ENCODE measurements at regions of chr10 and their contacts with region 1.

Region 1: GRCh38 chr10:6348096-6348874 is 145.6 kb downstream of the PFKFB3 start:
- DNase-seq: peak; percentile 41 to 96 (median 93)
- ATAC-seq: peak; percentile 95
- H3K4me3 ChIP-seq: peak overlapping the region; percentile 54
- H3K4me3 Mint-ChIP-seq: peak overlapping the region; percentile 78 to 88 (median 82)
- H3K27ac ChIP-seq: peak overlapping the region; percentile 79
- H3K27ac Mint-ChIP-seq: peak overlapping the region; percentile 91 to 99 (median 96)
- H3K4me1 ChIP-seq: peaks cover 25 to 34% of the 10 kb centered on the region in 2 donors
- H3K4me1 Mint-ChIP-seq: peaks cover 40 to 77% (median 57%) of the 10 kb centered on the region in 7 donors
- H3K27me3 ChIP-seq: no peaks in the 10 kb centered on the region
- H3K27me3 Mint-ChIP-seq: no peaks in the 10 kb centered on the region

Region 2: DNA sequence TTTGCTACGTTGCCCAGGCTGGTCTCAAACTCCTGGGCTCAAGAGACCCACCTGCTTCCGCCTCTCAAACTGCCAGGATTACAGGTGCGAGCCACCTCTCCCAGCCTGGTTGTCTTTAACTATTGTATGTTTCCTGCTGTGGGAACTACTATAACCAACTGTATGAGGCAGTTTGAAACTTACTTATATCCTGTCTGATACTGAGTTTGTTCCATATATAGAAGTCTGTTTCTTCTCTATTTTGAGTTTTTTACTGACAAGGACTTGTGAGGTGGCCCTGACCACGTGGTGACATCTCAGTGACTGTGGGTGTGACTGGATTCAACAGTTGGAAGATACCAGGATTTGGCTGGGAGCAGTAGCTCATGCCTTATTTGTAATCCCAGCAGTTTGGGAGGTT is 444.1 kb before region 1 on chr10:
- CTCF ChIA-PET with region 1: no interaction called
- POLR2A ChIA-PET with region 1: no interaction called
- intact Hi-C with region 1: no loop called
- DNase-seq: no peak
- ATAC-seq: no peak
- H3K4me3 ChIP-seq: no peak overlapping the region
- H3K4me3 Mint-ChIP-seq: no peak overlapping the region
- H3K27ac ChIP-seq: no peak overlapping the region
- H3K27ac Mint-ChIP-seq: peak overlapping the region in 3 of 9 donors; percentile 26 to 77 (median 37)
- H3K4me1 ChIP-seq: no peaks in the 10 kb centered on the region
- H3K4me1 Mint-ChIP-seq: peaks cover 15 to 47% (median 26%) of the 10 kb centered on the region in 7 donors
- H3K27me3 ChIP-seq: no peaks in the 10 kb centered on the region
- H3K27me3 Mint-ChIP-seq: no peaks in the 10 kb centered on the region

Region 3: DNA sequence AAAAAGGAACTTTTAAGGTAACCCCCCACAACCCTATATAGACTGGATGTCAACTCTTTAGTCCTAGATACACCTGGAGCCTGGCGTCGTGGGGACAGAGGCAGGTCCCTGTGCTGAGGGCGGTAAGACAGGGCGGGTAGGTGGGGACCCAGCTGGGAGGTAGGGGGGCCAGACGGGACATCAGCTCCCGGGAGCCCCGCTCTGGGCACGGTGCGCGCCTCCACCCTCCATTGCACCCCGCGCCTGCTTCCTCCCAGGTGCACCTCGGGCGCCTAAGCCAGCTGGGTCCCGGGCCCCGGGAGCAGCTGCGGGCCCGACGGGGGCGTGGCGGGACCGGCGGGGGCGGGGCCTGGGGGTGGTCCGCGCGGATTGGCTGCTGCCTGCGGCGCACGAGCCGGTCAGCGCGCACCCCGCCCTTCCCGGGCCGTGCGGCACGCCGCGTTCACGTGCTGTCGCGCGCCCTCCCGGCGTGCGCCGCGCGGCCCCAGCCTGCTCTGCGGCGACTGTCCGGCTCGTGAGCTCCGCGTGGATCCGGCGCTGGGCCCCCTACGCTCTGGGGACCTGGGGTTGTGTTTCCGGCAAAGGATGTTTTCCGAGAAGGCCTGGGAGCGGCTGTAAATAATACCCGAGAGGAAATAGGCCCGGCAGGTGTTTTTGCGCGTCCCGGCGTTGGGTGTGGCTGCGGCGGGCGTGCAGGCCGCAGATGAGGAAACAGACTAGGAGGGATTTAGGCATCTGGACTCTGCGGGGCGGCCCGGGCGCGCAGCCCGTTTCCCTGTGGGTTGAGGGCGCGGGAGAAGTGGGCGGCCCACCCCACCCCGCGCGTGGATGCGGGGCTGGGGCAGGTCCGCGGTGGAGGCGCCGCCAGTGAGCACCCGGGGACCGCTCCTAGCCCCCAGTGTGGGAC is 184.7 kb before region 1 on chr10:
- CTCF ChIA-PET with region 1: no interaction called
- POLR2A ChIA-PET with region 1: interaction called, 15 read pairs
- intact Hi-C with region 1: no loop called
- DNase-seq: peak; percentile 89 to 95 (median 94)
- ATAC-seq: peak; percentile 96
- H3K4me3 ChIP-seq: peak overlapping the region; percentile 81
- H3K4me3 Mint-ChIP-seq: peak overlapping the region; percentile 85 to 95 (median 92)
- H3K27ac ChIP-seq: peak overlapping the region; percentile 95
- H3K27ac Mint-ChIP-seq: peak overlapping the region; percentile 91 to 99 (median 97)
- H3K4me1 ChIP-seq: peaks cover 25 to 33% of the 10 kb centered on the region in 2 donors
- H3K4me1 Mint-ChIP-seq: peaks cover 30 to 64% (median 57%) of the 10 kb centered on the region in 7 donors
- H3K27me3 ChIP-seq: no peaks in the 10 kb centered on the region
- H3K27me3 Mint-ChIP-seq: no peaks in the 10 kb centered on the region

Region 4: GRCh38 chr10:6269953-6270867 is 78.1 kb before region 1 on chr10:
- CTCF ChIA-PET with region 1: no interaction called
- POLR2A ChIA-PET with region 1: interaction called, 6 read pairs
- intact Hi-C with region 1: loop called (anchors 1 kb)
- DNase-seq: peak in 8 of 9 donors; percentile 33 to 69 (median 52)
- ATAC-seq: peak; percentile 73
- H3K4me3 ChIP-seq: no peak overlapping the region
- H3K4me3 Mint-ChIP-seq: peak overlapping the region in 5 of 10 donors; percentile 8 to 72 (median 31)
- H3K27ac ChIP-seq: no peak overlapping the region
- H3K27ac Mint-ChIP-seq: peak overlapping the region; percentile 38 to 94 (median 85)
- H3K4me1 ChIP-seq: peaks cover 7 to 30% of the 10 kb centered on the region in 2 donors
- H3K4me1 Mint-ChIP-seq: peaks cover 23 to 63% (median 28%) of the 10 kb centered on the region in 7 donors
- H3K27me3 ChIP-seq: no peaks in the 10 kb centered on the region
- H3K27me3 Mint-ChIP-seq: no peaks in the 10 kb centered on the region

Region 5: GRCh38 chr10:6283655-6284054 is 64.6 kb before region 1 on chr10:
- CTCF ChIA-PET with region 1: no interaction called
- POLR2A ChIA-PET with region 1: no interaction called
- intact Hi-C with region 1: no loop called
- DNase-seq: no peak
- ATAC-seq: no peak
- H3K4me3 ChIP-seq: no peak overlapping the region
- H3K4me3 Mint-ChIP-seq: no peak overlapping the region
- H3K27ac ChIP-seq: no peak overlapping the region
- H3K27ac Mint-ChIP-seq: no peak overlapping the region
- H3K4me1 ChIP-seq: no peaks in the 10 kb centered on the region
- H3K4me1 Mint-ChIP-seq: peaks cover 0 to 18% (median 5%) of the 10 kb centered on the region in 7 donors
- H3K27me3 ChIP-seq: no peaks in the 10 kb centered on the region
- H3K27me3 Mint-ChIP-seq: no peaks in the 10 kb centered on the region

Region 6: GRCh38 chr10:6388261-6388893 is 40.1 kb after region 1 on chr10:
- CTCF ChIA-PET with region 1: interaction called, 4 read pairs
- POLR2A ChIA-PET with region 1: interaction called, 29 read pairs
- intact Hi-C with region 1: loop called in 1 of 2 experiments (anchors 2 kb)
- DNase-seq: no peak
- ATAC-seq: no peak
- H3K4me3 ChIP-seq: no peak overlapping the region
- H3K4me3 Mint-ChIP-seq: no peak overlapping the region
- H3K27ac ChIP-seq: no peak overlapping the region
- H3K27ac Mint-ChIP-seq: no peak overlapping the region
- H3K4me1 ChIP-seq: no peaks in the 10 kb centered on the region
- H3K4me1 Mint-ChIP-seq: peaks cover 0 to 4% (median 0%) of the 10 kb centered on the region in 7 donors
- H3K27me3 ChIP-seq: no peaks in the 10 kb centered on the region
- H3K27me3 Mint-ChIP-seq: no peaks in the 10 kb centered on the region

Region 7: GRCh38 chr10:6498771-6499170 is 150.5 kb after region 1 on chr10:
- CTCF ChIA-PET with region 1: no interaction called
- POLR2A ChIA-PET with region 1: no interaction called
- intact Hi-C with region 1: loop called in 1 of 2 experiments (anchors 10 kb)
- DNase-seq: peak in 8 of 9 donors; percentile 48 to 75 (median 67)
- ATAC-seq: peak; percentile 85
- H3K4me3 ChIP-seq: no peak overlapping the region
- H3K4me3 Mint-ChIP-seq: peak overlapping the region; percentile 13 to 86 (median 59)
- H3K27ac ChIP-seq: peak overlapping the region; percentile 36
- H3K27ac Mint-ChIP-seq: peak overlapping the region; percentile 81 to 94 (median 90)
- H3K4me1 ChIP-seq: peaks cover 33 to 49% of the 10 kb centered on the region in 2 donors
- H3K4me1 Mint-ChIP-seq: peaks cover 24 to 47% (median 43%) of the 10 kb centered on the region in 7 donors
- H3K27me3 ChIP-seq: no peaks in the 10 kb centered on the region
- H3K27me3 Mint-ChIP-seq: no peaks in the 10 kb centered on the region

Region 8: GRCh38 chr10:7311256-7312178 is 963.2 kb after region 1 on chr10:
- CTCF ChIA-PET with region 1: no interaction called
- POLR2A ChIA-PET with region 1: no interaction called
- intact Hi-C with region 1: no loop called
- DNase-seq: no peak
- ATAC-seq: no peak
- H3K4me3 ChIP-seq: no peak overlapping the region
- H3K4me3 Mint-ChIP-seq: peak overlapping the region in 1 of 10 donors; percentile 20
- H3K27ac ChIP-seq: no peak overlapping the region
- H3K27ac Mint-ChIP-seq: peak overlapping the region in 2 of 9 donors; percentile 26 to 32
- H3K4me1 ChIP-seq: peaks cover 0 to 6% of the 10 kb centered on the region in 2 donors
- H3K4me1 Mint-ChIP-seq: peaks cover 33 to 83% (median 64%) of the 10 kb centered on the region in 7 donors
- H3K27me3 ChIP-seq: no peaks in the 10 kb centered on the region
- H3K27me3 Mint-ChIP-seq: no peaks in the 10 kb centered on the region

Measured in naive thymus-derived CD4-positive, alpha-beta T cell (primary cell).